CD8-positive, alpha-beta memory T cell (primary cell): ENCODE measurements at regions of chr4 and their contacts with region 1.

Region 1: GRCh38 chr4:6974138-6974848 is 64.7 kb downstream of the TBC1D14 start:
- DNase-seq: peak; percentile 63 to 85 (median 76)
- H3K4me3 ChIP-seq: no peak overlapping the region
- H3K4me3 Mint-ChIP-seq: no peak overlapping the region
- H3K27ac ChIP-seq: no peak overlapping the region
- H3K27ac Mint-ChIP-seq: peak overlapping the region; percentile 7 to 91 (median 62)
- H3K4me1 ChIP-seq: peaks cover 9% of the 10 kb centered on the region
- H3K4me1 Mint-ChIP-seq: peaks cover 19 to 27% (median 24%) of the 10 kb centered on the region in 3 donors
- H3K27me3 ChIP-seq: no peaks in the 10 kb centered on the region
- H3K27me3 Mint-ChIP-seq: no peaks in the 10 kb centered on the region

Region 2: DNA sequence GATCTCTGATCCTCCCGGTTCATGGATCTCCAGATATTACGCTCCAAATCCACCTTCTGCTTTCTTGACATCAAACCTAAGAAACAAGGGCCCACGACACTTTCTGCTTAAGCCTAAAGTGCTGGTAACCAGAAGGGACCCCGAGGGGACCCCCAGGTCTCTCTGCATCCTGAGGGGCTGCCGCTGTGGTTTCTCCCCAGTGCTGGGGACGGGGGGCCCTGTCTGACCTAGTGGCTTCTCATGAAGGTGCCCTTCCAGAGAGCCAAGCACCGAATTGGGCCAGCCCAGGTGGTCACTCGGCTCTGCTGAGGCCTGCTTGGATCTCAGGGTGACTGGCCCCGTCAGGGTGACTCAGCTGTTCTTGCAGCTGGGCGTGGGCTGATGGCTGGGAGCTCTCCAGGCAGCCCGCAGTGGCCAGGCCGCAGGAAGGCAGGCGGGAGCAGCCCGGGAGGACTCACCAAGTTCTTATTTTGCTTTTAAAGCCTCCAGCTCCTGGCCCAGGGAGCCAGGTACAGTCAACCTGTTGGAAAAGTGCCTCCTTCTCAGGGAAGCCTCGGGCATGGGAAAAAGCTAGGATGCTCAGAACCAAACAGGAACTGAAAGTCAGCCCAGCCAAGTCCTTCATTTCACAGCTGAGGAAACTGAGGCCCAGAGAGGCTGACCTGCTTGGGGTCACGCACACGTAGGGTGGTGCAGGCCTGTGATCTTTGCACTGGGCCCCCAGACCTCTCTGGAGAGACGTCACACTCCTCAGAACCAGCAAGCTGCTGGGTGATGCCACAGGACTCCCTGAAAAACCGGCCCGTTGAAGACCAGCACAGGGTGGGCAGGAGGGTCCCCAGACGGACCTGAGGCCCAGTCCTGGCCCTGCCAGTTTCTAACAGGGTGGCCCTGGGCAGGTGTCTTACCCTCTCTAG is 241.6 kb before region 1 on chr4:
- CTCF ChIA-PET with region 1: no interaction called
- POLR2A ChIA-PET with region 1: no interaction called
- DNase-seq: no peak
- H3K4me3 ChIP-seq: no peak overlapping the region
- H3K4me3 Mint-ChIP-seq: no peak overlapping the region
- H3K27ac ChIP-seq: peak overlapping the region; percentile 83
- H3K27ac Mint-ChIP-seq: no peak overlapping the region
- H3K4me1 ChIP-seq: peaks cover 5% of the 10 kb centered on the region
- H3K4me1 Mint-ChIP-seq: peaks cover 0 to 6% (median 2%) of the 10 kb centered on the region in 3 donors
- H3K27me3 ChIP-seq: no peaks in the 10 kb centered on the region
- H3K27me3 Mint-ChIP-seq: peaks cover 0 to 8% of the 10 kb centered on the region in 2 donors

Region 3: GRCh38 chr4:6806924-6807636 is 167.2 kb before region 1 on chr4:
- CTCF ChIA-PET with region 1: no interaction called
- POLR2A ChIA-PET with region 1: no interaction called
- DNase-seq: no peak
- H3K4me3 ChIP-seq: no peak overlapping the region
- H3K4me3 Mint-ChIP-seq: peak overlapping the region in 1 of 7 donors; percentile 28
- H3K27ac ChIP-seq: no peak overlapping the region
- H3K27ac Mint-ChIP-seq: no peak overlapping the region
- H3K4me1 ChIP-seq: peaks cover 4% of the 10 kb centered on the region
- H3K4me1 Mint-ChIP-seq: peaks cover 33 to 76% (median 56%) of the 10 kb centered on the region in 3 donors
- H3K27me3 ChIP-seq: no peaks in the 10 kb centered on the region
- H3K27me3 Mint-ChIP-seq: peaks cover 0 to 3% of the 10 kb centered on the region in 2 donors

Region 4: GRCh38 chr4:6986781-6987587 is 12.7 kb after region 1 on chr4:
- CTCF ChIA-PET with region 1: interaction called, 15 read pairs
- POLR2A ChIA-PET with region 1: no interaction called
- DNase-seq: peak; percentile 89 to 94 (median 90)
- H3K4me3 ChIP-seq: peak overlapping the region; percentile 84
- H3K4me3 Mint-ChIP-seq: peak overlapping the region; percentile 93 to 97 (median 96)
- H3K27ac ChIP-seq: peak overlapping the region; percentile 83
- H3K27ac Mint-ChIP-seq: peak overlapping the region; percentile 84 to 99 (median 97)
- H3K4me1 ChIP-seq: peaks cover 47% of the 10 kb centered on the region
- H3K4me1 Mint-ChIP-seq: peaks cover 66 to 92% (median 85%) of the 10 kb centered on the region in 3 donors
- H3K27me3 ChIP-seq: no peaks in the 10 kb centered on the region
- H3K27me3 Mint-ChIP-seq: no peaks in the 10 kb centered on the region

Region 5: GRCh38 chr4:7081891-7082471 is 107.7 kb after region 1 on chr4:
- CTCF ChIA-PET with region 1: no interaction called
- POLR2A ChIA-PET with region 1: no interaction called
- DNase-seq: no peak
- H3K4me3 ChIP-seq: no peak overlapping the region
- H3K4me3 Mint-ChIP-seq: no peak overlapping the region
- H3K27ac ChIP-seq: no peak overlapping the region
- H3K27ac Mint-ChIP-seq: no peak overlapping the region
- H3K4me1 ChIP-seq: no peaks in the 10 kb centered on the region
- H3K4me1 Mint-ChIP-seq: no peaks in the 10 kb centered on the region
- H3K27me3 ChIP-seq: peaks cover 27% of the 10 kb centered on the region
- H3K27me3 Mint-ChIP-seq: peaks cover 11 to 70% of the 10 kb centered on the region in 2 donors